Ovary (tissue), 10 donors: ENCODE measurements at regions of chr9 and their contacts with region 1.

Region 1: GRCh38 chr9:17942230-17942897 is 363.5 kb downstream of the SH3GL2 start:
- DNase-seq: no peak
- H3K4me3 ChIP-seq: no peak overlapping the region
- H3K27ac ChIP-seq: no peak overlapping the region
- H3K4me1 ChIP-seq: no peaks in the 10 kb centered on the region
- H3K27me3 ChIP-seq: no peaks in the 10 kb centered on the region
- CTCF ChIP-seq: no peak
- EP300 ChIP-seq: no peak
- POLR2A ChIP-seq: no peak

Region 2: GRCh38 chr9:17519761-17520160 is 422.6 kb before region 1 on chr9:
- intact Hi-C with region 1: loop called in 1 of 4 experiments (anchors 10 kb)
- DNase-seq: no peak
- H3K4me3 ChIP-seq: no peak overlapping the region
- H3K27ac ChIP-seq: no peak overlapping the region
- H3K4me1 ChIP-seq: no peaks in the 10 kb centered on the region
- H3K27me3 ChIP-seq: no peaks in the 10 kb centered on the region
- CTCF ChIP-seq: no peak
- EP300 ChIP-seq: no peak
- POLR2A ChIP-seq: no peak